IMR-90 (cell line): ENCODE measurements at regions of chr2 and their contacts with region 1.

Region 1: GRCh38 chr2:38720613-38721241 is 30.4 kb downstream of the SRSF7 start:
- DNase-seq: peak; percentile 98
- ATAC-seq: peak; percentile 74
- H3K4me3 ChIP-seq: no peak overlapping the region
- H3K27ac ChIP-seq: peak overlapping the region; percentile 2; the same call in 1 of the 2 replicates
- H3K4me1 ChIP-seq: peaks cover 7% of the 10 kb centered on the region
- H3K27me3 ChIP-seq: no peaks in the 10 kb centered on the region
- CTCF ChIP-seq: no peak
- POLR2A ChIP-seq: no peak
- RAD21 ChIP-seq: no peak

Region 2: GRCh38 chr2:38665854-38666555 is 54.7 kb before region 1 on chr2 and contains the start of gene GALM:
- CTCF ChIA-PET with region 1: no interaction called
- POLR2A ChIA-PET with region 1: interaction called, 3 read pairs
- dilution Hi-C with region 1: no loop called
- in situ Hi-C with region 1: no loop called
- intact Hi-C with region 1: loop called (anchors 1 kb)
- DNase-seq: peak; percentile 96
- ATAC-seq: peak; percentile 95
- H3K4me3 ChIP-seq: peak within 1 kb of the TSS; percentile 68
- H3K27ac ChIP-seq: peak within 1 kb of the TSS; percentile 60
- H3K4me1 ChIP-seq: no peaks in the 10 kb centered on the region; the same call in 1 of the 2 replicates
- H3K27me3 ChIP-seq: no peaks in the 10 kb centered on the region
- CTCF ChIP-seq: no peak
- POLR2A ChIP-seq: no peak
- RAD21 ChIP-seq: no peak
- total RNA-seq, gene GALM: 16.4 and 24.2 TPM in 2 replicates